Right ventricle myocardium inferior (tissue), 1 donor: ENCODE measurements at regions of chr7 and their contacts with region 1.

Region 1: DNA sequence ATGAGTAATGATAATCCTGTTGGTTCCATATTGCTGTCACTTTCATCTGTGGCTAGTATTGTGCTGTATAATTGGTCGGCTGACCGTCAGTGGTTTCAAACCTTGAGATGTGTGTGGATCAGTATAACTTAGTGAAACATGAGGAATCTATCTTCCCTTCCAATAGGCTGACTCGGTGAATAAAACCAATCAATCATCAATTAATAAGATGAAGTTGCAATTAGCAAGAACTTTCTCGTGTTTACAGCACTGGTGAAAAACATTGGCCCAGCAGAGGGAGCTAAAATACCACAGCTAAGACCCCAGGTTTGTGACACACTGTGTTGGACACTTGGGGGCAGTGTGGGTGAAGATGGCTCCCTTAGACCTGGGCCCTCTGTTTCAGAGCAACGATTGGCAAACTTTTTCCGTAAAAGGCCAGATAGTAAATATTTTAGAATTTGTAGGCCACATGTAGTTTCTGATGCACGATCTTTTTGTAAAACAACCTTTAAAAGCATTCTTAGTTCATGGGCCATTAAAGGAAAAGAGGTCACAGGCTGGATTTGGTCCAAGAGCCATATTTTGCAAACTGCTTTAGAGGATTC is 47.8 kb downstream of the STRA8 start:
- DNase-seq: no peak
- ATAC-seq: peak; percentile 94

Region 2: GRCh38 chr7:135035252-135035651 is 246.2 kb before region 1 on chr7:
- intact Hi-C with region 1: no loop called
- DNase-seq: no peak
- ATAC-seq: no peak

Region 3: GRCh38 chr7:135342887-135343286 is 61.4 kb after region 1 on chr7:
- intact Hi-C with region 1: loop called (anchors 2 kb)
- DNase-seq: no peak
- ATAC-seq: peak; percentile 92

Region 4: GRCh38 chr7:135509903-135510602 is 228.6 kb after region 1 on chr7 and contains the start of gene CNOT4:
- intact Hi-C with region 1: loop called (anchors 2 kb)
- DNase-seq: peak; percentile 97
- ATAC-seq: peak; percentile 99
- total RNA-seq, gene CNOT4: 26.6 TPM

Region 5: GRCh38 chr7:135558337-135558767 is 276.9 kb after region 1 on chr7:
- intact Hi-C with region 1: loop called (anchors 1 kb)
- DNase-seq: peak; percentile 67
- ATAC-seq: peak; percentile 74

Region 6: GRCh38 chr7:135645296-135645904 is 363.9 kb after region 1 on chr7:
- intact Hi-C with region 1: loop called (anchors 1 kb)
- DNase-seq: no peak
- ATAC-seq: no peak